ENCODE measurements at regions of chr7 and their contacts with region 1.

Region 1: GRCh38 chr7:80918909-80919662 is at the start of gene SEMA3C:
- DNase-seq: peak; percentile 90 to 91
- ATAC-seq: peak; percentile 81
- total RNA-seq, gene SEMA3C: 64.6 to 66.7 TPM

Region 2: DNA sequence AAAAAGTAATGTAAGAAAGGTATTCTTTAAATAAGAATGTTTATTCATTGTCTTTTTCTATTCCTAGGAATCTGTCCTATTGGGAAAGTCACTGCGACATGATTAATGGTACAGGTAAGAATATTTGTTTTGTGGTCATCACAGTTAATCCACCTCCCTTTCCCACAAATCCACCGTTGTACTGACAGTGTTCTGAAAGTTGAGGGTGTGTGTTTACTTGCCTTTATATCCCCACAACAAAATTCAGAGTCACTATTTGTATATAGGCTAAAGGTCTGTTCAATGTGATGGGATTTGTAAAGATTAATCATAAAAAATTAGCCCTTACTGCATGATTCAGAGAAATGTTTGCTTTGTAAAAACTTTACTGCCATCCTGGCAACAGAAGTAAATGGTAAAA is 252.7 kb before region 1 on chr7:
- intact Hi-C with region 1: no loop called
- DNase-seq: no peak
- ATAC-seq: no peak

Region 3: DNA sequence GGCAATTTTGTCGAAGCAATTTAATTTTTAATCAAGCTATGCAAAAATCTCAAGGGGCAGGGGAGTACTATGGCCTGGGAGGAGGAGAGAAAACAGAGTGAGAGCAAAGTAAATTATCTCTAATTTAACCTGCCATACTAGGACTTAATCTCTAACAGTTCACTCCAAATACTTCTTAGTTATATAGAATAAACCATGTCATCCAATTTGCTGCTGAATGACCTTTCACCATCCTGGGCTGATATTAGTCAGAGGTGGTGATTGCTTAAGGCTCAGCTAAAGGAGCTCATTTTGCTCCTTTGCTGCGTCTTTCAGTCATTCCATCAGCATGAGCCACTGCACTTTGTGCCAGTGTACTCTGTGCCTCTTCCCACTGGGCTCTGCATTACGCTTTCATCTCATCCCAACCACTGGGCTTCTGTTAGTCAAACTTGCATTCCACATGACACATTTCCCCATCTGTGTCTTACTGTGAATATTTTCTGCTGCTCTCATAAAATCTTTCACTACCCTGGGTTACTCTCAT is 196.4 kb before region 1 on chr7:
- intact Hi-C with region 1: loop called in 1 of 2 experiments (anchors 10 kb)
- DNase-seq: peak in 1 of 2 donors; percentile 38
- ATAC-seq: no peak

Region 4: GRCh38 chr7:81004098-81004497 is 85.0 kb after region 1 on chr7:
- intact Hi-C with region 1: no loop called
- DNase-seq: no peak
- ATAC-seq: no peak

Region 5: GRCh38 chr7:81094952-81095351 is 175.9 kb after region 1 on chr7:
- intact Hi-C with region 1: no loop called
- DNase-seq: no peak
- ATAC-seq: no peak

Region 6: GRCh38 chr7:81447351-81447952 is 528.4 kb after region 1 on chr7:
- intact Hi-C with region 1: loop called in 1 of 2 experiments (anchors 10 kb)
- DNase-seq: peak; percentile 10 to 33
- ATAC-seq: peak; percentile 93

Measured in left colon (tissue), 2 donors.